ENCODE measurements at regions of chr4 and their contacts with region 1.

Region 1: GRCh38 chr4:48127682-48128394 is 6.2 kb downstream of the TXK start:
- DNase-seq: peak; percentile 74
- H3K4me3 Mint-ChIP-seq: peak overlapping the region; percentile 66
- H3K27ac Mint-ChIP-seq: peak overlapping the region; percentile 97
- H3K4me1 Mint-ChIP-seq: peaks cover 84% of the 10 kb centered on the region
- H3K27me3 Mint-ChIP-seq: no peaks in the 10 kb centered on the region

Region 2: GRCh38 chr4:47914220-47914925 is 213.5 kb before region 1 on chr4 and contains the start of gene NFXL1:
- intact Hi-C with region 1: loop called (anchors 1 kb)
- DNase-seq: peak; percentile 94
- H3K4me3 Mint-ChIP-seq: peak within 1 kb of the TSS; percentile 90
- H3K27ac Mint-ChIP-seq: peak within 1 kb of the TSS; percentile 95
- H3K4me1 Mint-ChIP-seq: peaks cover 31% of the 10 kb centered on the region
- H3K27me3 Mint-ChIP-seq: no peaks in the 10 kb centered on the region
- total RNA-seq, gene NFXL1: 13.1 and 16.5 TPM in 2 replicates

Region 3: DNA sequence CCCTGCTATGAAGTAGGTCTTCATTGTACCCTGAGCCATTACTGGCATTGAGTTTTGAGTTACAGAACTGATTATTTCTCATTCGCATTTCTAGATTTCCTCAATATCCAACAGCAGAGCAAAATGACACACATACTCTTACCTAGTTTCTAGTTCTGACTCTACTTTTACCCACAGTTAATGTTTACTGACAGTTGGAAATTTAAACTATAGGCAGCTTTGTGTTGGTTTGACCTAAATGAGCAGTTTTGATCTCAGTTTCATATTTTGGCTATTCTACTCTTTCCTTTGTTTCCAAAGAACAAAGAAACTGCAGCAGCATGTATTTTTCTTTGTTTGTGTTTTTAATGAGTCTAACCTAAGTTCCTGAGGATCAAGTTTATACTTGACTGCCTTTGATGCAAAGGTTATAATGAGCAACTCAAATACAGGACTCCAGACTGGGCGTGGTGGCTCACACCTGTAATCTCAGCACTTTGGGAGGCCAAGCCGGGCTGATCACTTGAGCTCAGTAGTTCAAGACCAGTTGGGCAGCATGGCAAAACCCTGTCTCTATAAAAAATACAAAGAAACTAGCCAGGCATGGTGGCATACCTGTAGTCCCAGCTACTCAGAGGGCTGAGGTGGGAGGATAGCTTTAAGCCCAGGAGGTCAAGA is 24.2 kb before region 1 on chr4:
- intact Hi-C with region 1: loop called (anchors 1 kb)
- DNase-seq: no peak
- H3K4me3 Mint-ChIP-seq: no peak overlapping the region
- H3K27ac Mint-ChIP-seq: peak overlapping the region; percentile 63
- H3K4me1 Mint-ChIP-seq: peaks cover 24% of the 10 kb centered on the region
- H3K27me3 Mint-ChIP-seq: no peaks in the 10 kb centered on the region

Region 4: GRCh38 chr4:48269861-48270522 is 142.2 kb after region 1 on chr4:
- intact Hi-C with region 1: loop called (anchors 1 kb)
- DNase-seq: peak; percentile 78
- H3K4me3 Mint-ChIP-seq: peak overlapping the region; percentile 89
- H3K27ac Mint-ChIP-seq: peak overlapping the region; percentile 74
- H3K4me1 Mint-ChIP-seq: peaks cover 16% of the 10 kb centered on the region
- H3K27me3 Mint-ChIP-seq: no peaks in the 10 kb centered on the region

Region 5: DNA sequence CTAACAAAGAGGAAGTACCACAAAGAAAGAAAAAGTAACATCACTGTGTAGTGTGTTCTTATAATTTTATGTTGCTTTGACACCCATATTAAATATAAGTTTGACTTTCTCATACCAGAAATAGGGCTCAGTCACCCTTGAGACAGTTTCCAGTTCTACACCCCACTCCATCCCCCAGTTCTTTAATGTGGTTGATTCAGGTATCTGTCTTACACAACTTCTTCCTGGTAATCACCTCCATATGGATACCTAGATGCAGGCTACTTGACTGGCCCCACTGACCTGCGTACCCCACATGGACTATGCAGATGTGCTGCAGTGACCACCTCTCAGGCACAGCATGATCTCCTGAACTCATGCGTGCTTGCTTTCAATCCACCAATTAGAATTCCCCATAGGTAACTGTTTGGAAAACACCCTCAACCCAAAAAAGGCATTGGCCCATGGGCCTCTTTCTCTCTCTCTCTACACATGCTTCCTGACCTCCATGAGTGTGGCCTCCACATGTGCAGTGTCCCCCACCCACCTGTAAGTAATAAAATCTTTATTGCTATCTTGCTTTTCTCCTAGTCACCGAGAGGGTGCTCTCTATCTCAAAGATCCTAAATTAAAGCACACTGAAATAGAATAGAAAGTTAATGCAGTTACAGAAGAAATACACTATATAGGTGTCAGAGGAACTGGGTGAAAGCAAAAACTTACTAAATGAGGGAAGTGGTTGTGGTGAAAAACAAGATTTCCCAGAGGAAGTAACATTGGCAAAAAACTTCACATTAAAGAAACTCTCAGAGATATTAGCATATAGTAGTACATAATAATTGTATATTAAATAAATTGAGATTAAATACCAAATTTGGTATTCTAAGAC is 460.6 kb after region 1 on chr4:
- intact Hi-C with region 1: no loop called
- DNase-seq: no peak
- H3K4me3 Mint-ChIP-seq: no peak overlapping the region
- H3K27ac Mint-ChIP-seq: peak overlapping the region; percentile 1
- H3K4me1 Mint-ChIP-seq: peaks cover 14% of the 10 kb centered on the region
- H3K27me3 Mint-ChIP-seq: no peaks in the 10 kb centered on the region

Region 6: GRCh38 chr4:48830706-48831531 is 703.1 kb after region 1 on chr4 and contains the start of gene OCIAD1:
- intact Hi-C with region 1: loop called (anchors 5 kb)
- DNase-seq: peak; percentile 94
- H3K4me3 Mint-ChIP-seq: peak within 1 kb of the TSS; percentile 99
- H3K27ac Mint-ChIP-seq: peak within 1 kb of the TSS; percentile 100
- H3K4me1 Mint-ChIP-seq: peaks cover 26% of the 10 kb centered on the region
- H3K27me3 Mint-ChIP-seq: peaks cover 2% of the 10 kb centered on the region
- total RNA-seq, gene OCIAD1: 120 and 122 TPM in 2 replicates